ENCODE measurements at regions of chr5 and their contacts with region 1.

Region 1: DNA sequence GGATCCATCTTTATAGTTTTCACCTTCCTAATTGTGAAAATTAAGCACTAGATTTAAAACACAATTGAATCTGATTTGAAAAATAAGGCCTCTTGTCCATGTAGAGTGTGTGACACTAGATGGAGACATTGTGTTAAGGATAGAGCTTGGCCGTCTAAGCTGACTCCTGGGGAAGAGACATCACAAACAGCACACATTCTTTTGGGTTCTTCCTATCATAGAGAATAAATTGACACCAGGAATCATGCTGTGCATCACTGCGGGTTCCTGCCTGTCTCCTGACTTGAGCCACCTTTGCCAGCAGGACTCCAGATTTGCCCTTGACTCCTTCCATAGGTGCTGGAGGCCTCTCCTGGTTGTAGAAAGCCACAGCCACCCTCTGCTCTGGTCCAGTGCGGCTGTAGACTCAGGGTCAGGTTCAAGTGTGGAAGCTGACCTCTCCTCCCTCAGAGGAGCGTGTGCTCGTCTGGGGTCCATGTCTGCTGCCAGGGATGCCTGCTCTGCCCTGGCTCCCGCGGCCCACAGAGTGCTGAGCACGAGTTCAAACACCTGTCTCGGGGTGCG is 11.2 kb downstream of the ROPN1L start:
- DNase-seq: no peak
- ATAC-seq: peak; percentile 84
- H3K4me3 Mint-ChIP-seq: no peak overlapping the region
- H3K27ac Mint-ChIP-seq: no peak overlapping the region
- H3K4me1 Mint-ChIP-seq: peaks cover 3% of the 10 kb centered on the region
- H3K27me3 Mint-ChIP-seq: no peaks in the 10 kb centered on the region

Region 2: DNA sequence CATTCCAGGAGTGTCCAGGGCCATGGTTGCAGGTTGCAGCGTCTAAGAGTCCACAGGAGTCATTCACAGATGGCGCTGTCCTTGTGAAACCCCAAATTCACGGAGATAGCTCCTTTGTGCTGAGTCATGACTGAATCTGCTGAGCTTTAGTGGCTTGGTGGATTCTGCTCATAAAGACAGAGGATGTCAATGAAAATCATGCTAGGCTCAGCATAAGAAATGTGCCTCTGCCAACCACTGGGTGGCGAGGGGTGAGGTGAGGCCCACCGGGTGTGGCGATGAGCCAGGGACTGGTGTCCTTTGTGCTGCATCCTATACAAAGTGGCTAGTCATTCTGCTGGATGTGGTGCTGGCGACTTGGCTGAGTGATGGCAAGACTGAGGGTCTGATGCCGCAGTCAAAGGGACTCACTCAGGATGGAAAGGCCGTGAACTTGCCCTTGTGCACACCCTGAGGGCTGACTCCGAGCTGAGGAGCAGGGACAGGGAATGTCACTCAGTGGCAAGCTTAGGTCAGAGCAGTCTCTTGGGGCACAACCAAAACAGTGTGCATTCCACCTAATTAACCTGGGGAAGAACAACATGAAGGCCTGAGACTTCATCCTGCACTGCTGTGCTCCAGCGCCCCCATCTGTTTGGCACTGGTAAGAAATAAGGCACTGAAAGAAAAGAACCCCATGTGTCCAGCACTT is 236.7 kb after region 1 on chr5:
- CTCF ChIA-PET with region 1: interaction called, 8 read pairs
- POLR2A ChIA-PET with region 1: no interaction called
- intact Hi-C with region 1: loop called (anchors 1 kb)
- DNase-seq: peak; percentile 68
- ATAC-seq: peak; percentile 65
- H3K4me3 Mint-ChIP-seq: no peak overlapping the region
- H3K27ac Mint-ChIP-seq: peak overlapping the region; percentile 58
- H3K4me1 Mint-ChIP-seq: peaks cover 5% of the 10 kb centered on the region
- H3K27me3 Mint-ChIP-seq: no peaks in the 10 kb centered on the region

Region 3: DNA sequence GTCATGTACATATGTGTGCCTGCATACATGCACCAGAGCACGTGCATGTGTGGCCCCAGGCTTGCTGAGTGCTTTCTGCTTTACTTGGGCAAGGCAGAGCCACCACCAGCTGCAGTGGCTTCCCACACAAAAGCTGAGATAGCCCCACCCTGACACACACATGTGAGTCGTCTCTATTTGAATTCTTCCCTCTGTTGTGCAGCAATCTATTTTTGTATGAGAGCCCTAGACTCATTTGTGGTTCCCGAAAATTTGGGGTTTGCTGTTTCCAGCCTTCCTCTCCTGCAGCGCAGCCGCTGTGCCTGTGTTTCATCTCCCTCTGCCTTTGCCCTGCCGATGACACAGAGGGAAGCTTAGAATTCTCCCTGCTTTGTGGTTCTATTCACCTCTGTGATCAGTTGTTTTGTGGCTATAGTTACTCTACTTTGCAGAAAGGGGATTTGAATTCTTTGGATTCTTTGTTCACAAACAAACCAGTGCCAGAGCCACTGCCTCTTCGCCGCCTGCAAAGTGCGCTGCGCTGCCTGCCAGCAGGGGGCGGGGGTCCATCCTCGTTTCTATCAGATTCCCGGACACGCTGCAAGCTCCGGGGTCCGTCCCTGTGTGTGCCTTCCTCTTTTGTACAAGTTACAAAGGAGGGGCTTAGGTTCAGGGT is 404.0 kb after region 1 on chr5:
- CTCF ChIA-PET with region 1: no interaction called
- POLR2A ChIA-PET with region 1: no interaction called
- intact Hi-C with region 1: loop called in 1 of 2 experiments (anchors 5 kb)
- DNase-seq: peak; percentile 60
- ATAC-seq: no peak
- H3K4me3 Mint-ChIP-seq: no peak overlapping the region
- H3K27ac Mint-ChIP-seq: no peak overlapping the region
- H3K4me1 Mint-ChIP-seq: no peaks in the 10 kb centered on the region
- H3K27me3 Mint-ChIP-seq: peaks cover 10% of the 10 kb centered on the region

Region 4: GRCh38 chr5:11443831-11444230 is 991.0 kb after region 1 on chr5:
- CTCF ChIA-PET with region 1: no interaction called
- POLR2A ChIA-PET with region 1: interaction called, 10 read pairs
- intact Hi-C with region 1: no loop called
- DNase-seq: no peak
- ATAC-seq: no peak
- H3K4me3 Mint-ChIP-seq: no peak overlapping the region
- H3K27ac Mint-ChIP-seq: no peak overlapping the region
- H3K4me1 Mint-ChIP-seq: no peaks in the 10 kb centered on the region
- H3K27me3 Mint-ChIP-seq: peaks cover 2% of the 10 kb centered on the region